T-cell (primary cell): ENCODE measurements at regions of chr1 and their contacts with region 1.

Region 1: GRCh38 chr1:168365719-168366479 is 85.2 kb downstream of the TBX19 start:
- DNase-seq: peak in 3 of 35 experiments; percentile 10 to 58 (median 16)
- ATAC-seq: peak in 2 of 4 experiments; percentile 32 to 36
- H3K4me3 ChIP-seq: no peak overlapping the region
- H3K4me3 Mint-ChIP-seq: no peak overlapping the region
- H3K27ac ChIP-seq: no peak overlapping the region
- H3K27ac Mint-ChIP-seq: no peak overlapping the region
- H3K4me1 ChIP-seq: peaks cover 2 to 16% of the 10 kb centered on the region in 2 experiments
- H3K4me1 Mint-ChIP-seq: peaks cover 7 to 45% (median 32%) of the 10 kb centered on the region in 3 donors
- H3K27me3 ChIP-seq: no peaks in the 10 kb centered on the region
- H3K27me3 Mint-ChIP-seq: peaks cover 0 to 4% of the 10 kb centered on the region in 2 donors

Region 2: DNA sequence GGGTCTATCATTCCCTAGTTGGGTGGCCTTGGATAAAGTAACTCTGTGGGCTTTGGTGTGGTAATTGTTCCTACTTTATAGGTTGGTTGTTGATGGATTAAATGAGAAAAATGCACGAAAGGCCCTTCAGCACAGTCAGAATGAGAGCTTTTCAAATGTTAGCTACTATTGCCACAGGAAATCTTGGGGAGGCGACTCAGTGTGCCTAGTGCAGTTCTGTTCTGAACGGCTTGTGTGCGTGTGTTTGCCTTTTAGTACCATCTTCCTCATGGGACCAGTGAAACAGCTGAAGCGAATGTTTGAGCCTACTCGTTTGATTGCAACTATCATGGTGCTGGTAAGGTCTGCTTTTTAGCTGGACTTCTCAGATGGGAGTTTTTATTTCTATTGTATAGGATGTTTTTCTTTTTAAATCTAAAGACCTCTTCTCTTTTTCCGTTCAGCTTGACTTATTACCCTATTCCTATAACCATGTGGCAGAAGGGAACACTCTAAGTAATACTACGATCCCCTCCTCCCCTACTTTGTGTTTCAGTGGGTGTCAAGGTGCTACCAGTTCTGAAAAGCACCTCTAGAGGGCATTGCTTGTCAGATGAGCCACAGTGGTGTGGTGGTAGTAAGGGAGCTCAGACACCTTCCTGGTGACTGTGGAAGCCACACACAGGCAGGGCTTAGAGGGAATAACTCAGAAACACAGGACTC is 130.9 kb before region 1 on chr1:
- CTCF ChIA-PET with region 1: interaction called, 3 to 12 read pairs
- POLR2A ChIA-PET with region 1: no interaction called
- DNase-seq: peak in 27 of 35 experiments; percentile 3 to 65 (median 23)
- ATAC-seq: peak; percentile 85 to 93 (median 86)
- H3K4me3 ChIP-seq: no peak overlapping the region
- H3K4me3 Mint-ChIP-seq: no peak overlapping the region
- H3K27ac ChIP-seq: no peak overlapping the region
- H3K27ac Mint-ChIP-seq: no peak overlapping the region
- H3K4me1 ChIP-seq: peaks cover 0 to 8% of the 10 kb centered on the region in 2 experiments
- H3K4me1 Mint-ChIP-seq: peaks cover 61 to 65% (median 62%) of the 10 kb centered on the region in 3 donors
- H3K27me3 ChIP-seq: no peaks in the 10 kb centered on the region
- H3K27me3 Mint-ChIP-seq: no peaks in the 10 kb centered on the region

Region 3: DNA sequence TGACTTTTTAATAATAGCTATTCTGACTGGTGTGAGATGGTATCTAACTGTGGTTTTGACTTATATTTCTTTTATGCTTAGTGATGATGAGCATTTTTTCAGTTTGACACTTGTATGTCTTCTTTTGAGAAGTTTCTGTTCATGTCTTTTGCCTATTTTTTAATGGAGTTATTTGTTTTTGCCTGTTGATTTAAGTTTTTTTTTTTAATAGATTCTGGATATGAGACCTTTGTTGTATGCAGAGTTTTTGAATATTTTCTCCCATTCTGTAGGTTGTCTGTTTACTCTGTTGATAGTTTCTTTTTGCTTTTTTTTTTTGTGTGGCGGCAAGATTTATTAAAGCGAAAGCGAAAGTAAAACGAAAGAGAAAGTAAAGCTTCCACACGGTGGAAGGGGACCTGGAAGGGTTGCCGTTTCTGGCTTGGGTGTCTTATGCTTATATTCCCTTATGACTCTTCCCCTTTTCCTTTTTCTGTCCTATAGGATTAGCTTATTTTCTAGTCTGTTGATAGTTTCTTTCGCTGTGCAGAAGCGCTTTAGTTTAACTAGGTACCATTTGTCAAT is 17.7 kb before region 1 on chr1:
- CTCF ChIA-PET with region 1: interaction called, 99 to 234 read pairs
- POLR2A ChIA-PET with region 1: interaction called, 4 to 10 read pairs
- DNase-seq: peak in 1 of 35 experiments; percentile 72
- ATAC-seq: peak in 2 of 4 experiments; percentile 12 to 71
- H3K4me3 ChIP-seq: peak overlapping the region; percentile 55 to 59
- H3K4me3 Mint-ChIP-seq: peak overlapping the region; percentile 85 to 92 (median 86)
- H3K27ac ChIP-seq: peak overlapping the region; percentile 74
- H3K27ac Mint-ChIP-seq: peak overlapping the region; percentile 90 to 92
- H3K4me1 ChIP-seq: peaks cover 0 to 3% of the 10 kb centered on the region in 2 experiments
- H3K4me1 Mint-ChIP-seq: peaks cover 21 to 40% (median 27%) of the 10 kb centered on the region in 3 donors
- H3K27me3 ChIP-seq: no peaks in the 10 kb centered on the region
- H3K27me3 Mint-ChIP-seq: no peaks in the 10 kb centered on the region